ENCODE measurements at regions of chr1 and their contacts with region 1.

Region 1: GRCh38 chr1:203504397-203505250 is 10.7 kb downstream of the OPTC start:
- DNase-seq: peak; percentile 68 to 78 (median 69)
- H3K4me3 ChIP-seq: no peak overlapping the region
- H3K4me3 Mint-ChIP-seq: no peak overlapping the region
- H3K27ac ChIP-seq: no peak overlapping the region
- H3K27ac Mint-ChIP-seq: no peak overlapping the region
- H3K4me1 ChIP-seq: no peaks in the 10 kb centered on the region
- H3K4me1 Mint-ChIP-seq: peaks cover 2% of the 10 kb centered on the region
- H3K27me3 ChIP-seq: no peaks in the 10 kb centered on the region
- H3K27me3 Mint-ChIP-seq: peaks cover 10 to 18% (median 14%) of the 10 kb centered on the region in 3 donors
- CTCF ChIP-seq: peak; percentile 76

Region 2: GRCh38 chr1:203402629-203403337 is 101.8 kb before region 1 on chr1:
- intact Hi-C with region 1: no loop called
- DNase-seq: peak; percentile 88 to 98 (median 94)
- H3K4me3 ChIP-seq: no peak overlapping the region
- H3K4me3 Mint-ChIP-seq: no peak overlapping the region
- H3K27ac ChIP-seq: peak overlapping the region; percentile 77 to 88
- H3K27ac Mint-ChIP-seq: peak overlapping the region; percentile 89 to 95 (median 94)
- H3K4me1 ChIP-seq: peaks cover 24 to 28% of the 10 kb centered on the region in 2 donors
- H3K4me1 Mint-ChIP-seq: peaks cover 35% of the 10 kb centered on the region
- H3K27me3 ChIP-seq: peaks cover 0 to 2% of the 10 kb centered on the region in 2 donors
- H3K27me3 Mint-ChIP-seq: peaks cover 3 to 5% (median 4%) of the 10 kb centered on the region in 3 donors
- CTCF ChIP-seq: no peak

Region 3: DNA sequence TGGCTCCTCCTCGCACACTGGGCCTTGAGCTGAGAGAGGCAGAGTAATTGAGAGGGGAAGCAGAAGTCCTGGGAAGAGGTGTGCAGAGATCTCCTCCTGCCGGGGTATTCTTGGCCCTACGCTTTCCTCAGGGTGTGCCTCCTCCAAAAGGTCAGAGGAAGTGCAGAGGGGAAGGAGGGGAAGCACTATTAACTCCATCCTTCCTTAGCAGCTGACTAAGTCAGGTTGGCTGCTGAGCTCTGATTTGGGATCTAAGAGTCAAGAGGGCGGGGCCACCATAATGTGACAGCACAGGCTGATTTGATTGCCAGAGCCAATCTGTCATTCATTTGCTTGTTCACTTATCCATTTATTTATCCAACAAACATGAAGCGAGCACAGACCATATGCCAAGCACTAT is 134.3 kb after region 1 on chr1:
- intact Hi-C with region 1: loop called in 1 of 2 experiments (anchors 2 kb)
- DNase-seq: peak; percentile 73 to 81 (median 81)
- H3K4me3 ChIP-seq: peak overlapping the region in 1 of 3 experiments; percentile 6
- H3K4me3 Mint-ChIP-seq: peak overlapping the region in 1 of 2 donors; percentile 69
- H3K27ac ChIP-seq: no peak overlapping the region
- H3K27ac Mint-ChIP-seq: peak overlapping the region; percentile 33 to 91 (median 83)
- H3K4me1 ChIP-seq: peaks cover 23 to 27% of the 10 kb centered on the region in 2 donors
- H3K4me1 Mint-ChIP-seq: peaks cover 31% of the 10 kb centered on the region
- H3K27me3 ChIP-seq: no peaks in the 10 kb centered on the region
- H3K27me3 Mint-ChIP-seq: peaks cover 0 to 2% (median 0%) of the 10 kb centered on the region in 3 donors
- CTCF ChIP-seq: peak; percentile 54

Region 4: GRCh38 chr1:203702130-203702577 is 197.5 kb after region 1 on chr1:
- intact Hi-C with region 1: loop called (anchors 1 kb)
- DNase-seq: peak; percentile 15 to 40 (median 34)
- H3K4me3 ChIP-seq: no peak overlapping the region
- H3K4me3 Mint-ChIP-seq: no peak overlapping the region
- H3K27ac ChIP-seq: no peak overlapping the region
- H3K27ac Mint-ChIP-seq: peak overlapping the region in 5 of 7 donors; percentile 24 to 84 (median 64)
- H3K4me1 ChIP-seq: peaks cover 0 to 9% of the 10 kb centered on the region in 2 donors
- H3K4me1 Mint-ChIP-seq: peaks cover 7% of the 10 kb centered on the region
- H3K27me3 ChIP-seq: no peaks in the 10 kb centered on the region
- H3K27me3 Mint-ChIP-seq: no peaks in the 10 kb centered on the region
- CTCF ChIP-seq: peak; percentile 97

Region 5: GRCh38 chr1:203769505-203770343 is 265.1 kb after region 1 on chr1:
- intact Hi-C with region 1: loop called in 1 of 2 experiments (anchors 10 kb)
- DNase-seq: peak; percentile 92 to 98 (median 92)
- H3K4me3 ChIP-seq: peak overlapping the region in 1 of 3 experiments; percentile 38
- H3K4me3 Mint-ChIP-seq: peak overlapping the region; percentile 9 to 55
- H3K27ac ChIP-seq: peak overlapping the region; percentile 22 to 72
- H3K27ac Mint-ChIP-seq: peak overlapping the region; percentile 71 to 97 (median 82)
- H3K4me1 ChIP-seq: peaks cover 12 to 15% of the 10 kb centered on the region in 2 donors
- H3K4me1 Mint-ChIP-seq: peaks cover 32% of the 10 kb centered on the region
- H3K27me3 ChIP-seq: no peaks in the 10 kb centered on the region
- H3K27me3 Mint-ChIP-seq: peaks cover 0 to 4% (median 0%) of the 10 kb centered on the region in 3 donors
- CTCF ChIP-seq: no peak